Upper lobe of right lung (tissue), 1 donor: ENCODE measurements at regions of chr11 and their contacts with region 1.

Region 1: DNA sequence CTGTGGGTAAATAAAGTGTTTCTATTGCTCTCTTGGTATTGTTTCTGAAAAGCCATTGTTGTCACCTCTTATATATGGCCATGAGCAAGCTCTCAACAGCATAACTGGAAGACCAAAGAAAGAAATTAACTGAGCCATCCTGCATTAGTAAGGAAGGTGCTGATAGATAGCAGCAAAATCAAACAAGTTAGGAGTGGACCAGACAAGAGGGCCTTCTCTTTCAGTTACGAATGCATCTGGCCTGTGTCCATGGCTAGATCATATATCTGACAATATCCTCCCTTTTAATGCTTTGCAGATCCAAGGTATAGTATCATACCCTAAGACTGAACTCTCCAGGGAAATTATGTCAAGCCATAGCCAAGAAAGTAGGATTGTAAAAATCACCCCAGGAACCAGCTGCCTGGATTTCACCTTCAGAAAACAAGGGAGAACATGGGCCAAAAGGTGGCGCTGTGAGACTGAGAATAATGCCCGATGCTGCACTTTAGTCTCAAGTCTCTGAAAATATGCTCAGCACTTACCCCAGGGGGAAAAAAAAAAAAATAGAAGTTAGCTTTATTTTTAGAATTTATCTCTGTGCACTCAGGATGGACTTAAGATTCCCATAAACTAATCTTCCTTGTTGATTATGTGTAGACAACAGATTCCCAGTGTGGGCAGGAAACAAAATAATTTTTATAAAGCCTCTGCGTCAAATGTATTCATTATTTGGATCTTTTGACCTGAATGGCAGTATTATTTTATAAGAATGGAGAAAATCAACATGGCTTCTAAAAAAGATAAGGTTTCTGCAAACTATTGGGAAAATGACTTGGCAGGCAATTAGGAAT is 415.1 kb downstream of the ETS1 start:
- DNase-seq: peak; percentile 73
- ATAC-seq: peak; percentile 92
- H3K4me3 ChIP-seq: no peak overlapping the region
- H3K27ac ChIP-seq: no peak overlapping the region
- H3K4me1 ChIP-seq: no peaks in the 10 kb centered on the region
- H3K27me3 ChIP-seq: no peaks in the 10 kb centered on the region
- CTCF ChIP-seq: peak; percentile 84

Region 2: DNA sequence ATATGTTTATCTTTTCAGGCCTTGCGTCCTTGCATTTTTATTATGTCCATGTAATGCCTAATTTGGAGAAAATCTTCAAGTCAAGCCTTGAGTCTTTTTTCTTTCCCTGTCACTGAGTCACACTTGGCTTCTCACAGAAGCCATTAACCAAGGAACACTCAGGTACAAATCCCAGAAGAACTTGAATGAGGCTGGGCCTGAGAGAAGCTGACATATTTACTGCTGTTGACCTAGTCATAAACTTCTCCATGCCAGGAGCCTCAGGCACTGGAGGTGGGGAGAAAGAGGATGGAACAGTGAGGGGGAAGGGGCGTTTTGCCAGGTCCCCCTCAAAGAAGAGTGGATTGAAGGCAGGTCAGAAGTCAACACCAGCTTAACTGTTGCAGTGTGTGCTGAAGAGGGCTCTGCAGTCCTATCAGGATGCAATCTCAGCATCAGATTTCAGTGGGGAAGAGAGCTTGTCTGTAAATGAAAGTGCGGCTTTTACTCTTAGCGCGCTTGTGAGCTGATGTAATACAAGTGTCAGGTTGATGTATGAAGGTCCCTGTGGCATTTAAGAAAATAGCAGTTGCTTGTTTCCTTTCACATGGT is 110.9 kb before region 1 on chr11:
- intact Hi-C with region 1: no loop called
- DNase-seq: no peak
- ATAC-seq: no peak
- H3K4me3 ChIP-seq: no peak overlapping the region
- H3K27ac ChIP-seq: no peak overlapping the region
- H3K4me1 ChIP-seq: no peaks in the 10 kb centered on the region
- H3K27me3 ChIP-seq: peaks cover 4% of the 10 kb centered on the region
- CTCF ChIP-seq: no peak

Region 3: GRCh38 chr11:128824191-128825049 is 652.2 kb after region 1 on chr11:
- intact Hi-C with region 1: loop called (anchors 10 kb)
- DNase-seq: no peak
- ATAC-seq: no peak
- H3K4me3 ChIP-seq: peak overlapping the region; percentile 21
- H3K27ac ChIP-seq: no peak overlapping the region
- H3K4me1 ChIP-seq: no peaks in the 10 kb centered on the region
- H3K27me3 ChIP-seq: no peaks in the 10 kb centered on the region
- CTCF ChIP-seq: no peak